Pancreas (tissue), 10 donors: ENCODE measurements at regions of chr12 and their contacts with region 1.

Region 1: GRCh38 chr12:59595883-59596540 is at the start of gene SLC16A7:
- DNase-seq: peak; percentile 90 to 95 (median 92)
- ATAC-seq: peak; percentile 83 to 88 (median 84)
- H3K4me3 ChIP-seq: peak within 1 kb of the TSS; percentile 49 to 72 (median 68)
- H3K27ac ChIP-seq: peak within 1 kb of the TSS; percentile 97 to 99 (median 98)
- H3K4me1 ChIP-seq: peaks cover 8 to 16% (median 16%) of the 10 kb centered on the region in 3 donors
- H3K27me3 ChIP-seq: no peaks in the 10 kb centered on the region
- CTCF ChIP-seq: no peak
- total RNA-seq, gene SLC16A7: 28.2 to 47.4 (median 34.7) TPM

Region 2: GRCh38 chr12:59517522-59517921 is 78.5 kb before region 1 on chr12:
- intact Hi-C with region 1: no loop called
- DNase-seq: no peak
- ATAC-seq: no peak
- H3K4me3 ChIP-seq: no peak overlapping the region
- H3K27ac ChIP-seq: no peak overlapping the region
- H3K4me1 ChIP-seq: no peaks in the 10 kb centered on the region
- H3K27me3 ChIP-seq: no peaks in the 10 kb centered on the region
- CTCF ChIP-seq: no peak

Region 3: GRCh38 chr12:59649203-59649602 is 53.2 kb after region 1 on chr12:
- intact Hi-C with region 1: loop called in 1 of 3 experiments (anchors 5 kb)
- DNase-seq: no peak
- ATAC-seq: no peak
- H3K4me3 ChIP-seq: no peak overlapping the region
- H3K27ac ChIP-seq: peak overlapping the region in 1 of 4 donors; percentile 83
- H3K4me1 ChIP-seq: peaks cover 21 to 42% (median 27%) of the 10 kb centered on the region in 3 donors
- H3K27me3 ChIP-seq: peaks cover 0 to 5% (median 0%) of the 10 kb centered on the region in 4 donors
- CTCF ChIP-seq: no peak

Region 4: DNA sequence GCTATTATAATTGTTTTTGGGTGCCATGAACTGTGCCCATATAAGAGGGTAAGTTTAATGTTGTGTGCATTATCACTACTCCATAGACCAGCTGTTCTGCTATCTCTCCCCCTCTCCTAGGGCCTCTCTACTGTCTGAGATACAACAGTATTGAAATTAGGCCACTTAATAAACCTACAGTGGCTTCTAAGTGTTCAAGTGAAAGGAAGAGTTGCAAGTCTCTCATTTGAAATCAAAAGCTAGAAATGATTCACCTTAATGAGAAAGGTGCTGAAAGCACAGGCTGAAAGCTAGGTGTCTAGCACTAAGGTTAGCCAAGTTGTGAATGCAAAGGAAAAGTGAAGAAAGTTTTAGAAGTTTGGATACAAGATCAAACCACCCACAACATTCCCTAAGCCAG is 167.8 kb after region 1 on chr12:
- intact Hi-C with region 1: loop called in 1 of 3 experiments (anchors 10 kb)
- DNase-seq: no peak
- ATAC-seq: no peak
- H3K4me3 ChIP-seq: no peak overlapping the region
- H3K27ac ChIP-seq: no peak overlapping the region
- H3K4me1 ChIP-seq: no peaks in the 10 kb centered on the region
- H3K27me3 ChIP-seq: no peaks in the 10 kb centered on the region
- CTCF ChIP-seq: no peak